ENCODE measurements at regions of chr6 and their contacts with region 1.

Region 1: DNA sequence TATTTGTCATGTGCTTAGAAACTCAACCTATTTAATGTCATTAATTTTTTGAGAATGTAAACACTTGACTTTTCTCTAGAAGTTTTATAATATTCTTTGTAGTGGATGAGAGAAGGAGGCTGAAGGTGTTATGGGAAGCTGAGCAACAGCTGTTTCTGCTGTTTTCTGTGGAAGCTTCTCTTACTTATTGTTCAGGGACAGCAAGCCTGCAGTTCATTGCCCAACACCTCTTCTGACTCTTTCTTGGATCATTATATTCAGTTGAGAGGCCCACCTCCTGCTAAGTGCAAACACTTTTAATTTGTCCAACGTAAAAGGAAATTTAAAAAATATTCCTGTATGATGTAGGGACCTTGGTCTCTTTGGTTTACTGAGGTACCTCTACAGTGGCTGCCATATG is 12.0 kb upstream of the ADGRF4 start:
- DNase-seq: no peak
- ATAC-seq: no peak
- H3K4me3 ChIP-seq: no peak overlapping the region
- H3K27ac ChIP-seq: no peak overlapping the region
- H3K4me1 ChIP-seq: no peaks in the 10 kb centered on the region
- H3K27me3 ChIP-seq: peaks cover 2 to 4% of the 10 kb centered on the region in 2 experiments; a peak in 2 of 5 replicates
- CTCF ChIP-seq: no peak
- EP300 ChIP-seq: no peak
- POLR2A ChIP-seq: no peak
- RAD21 ChIP-seq: no peak

Region 2: GRCh38 chr6:47701352-47701751 is 14.9 kb after region 1 on chr6:
- CTCF ChIA-PET with region 1: no interaction called
- POLR2A ChIA-PET with region 1: interaction called, 12 read pairs
- in situ Hi-C with region 1: no loop called
- intact Hi-C with region 1: no loop called
- DNase-seq: no peak
- ATAC-seq: no peak
- H3K4me3 ChIP-seq: no peak overlapping the region
- H3K27ac ChIP-seq: no peak overlapping the region
- H3K4me1 ChIP-seq: no peaks in the 10 kb centered on the region
- H3K27me3 ChIP-seq: peaks cover 2 to 9% of the 10 kb centered on the region in 2 experiments; a peak in 3 of 5 replicates
- CTCF ChIP-seq: no peak
- EP300 ChIP-seq: no peak
- POLR2A ChIP-seq: no peak
- RAD21 ChIP-seq: no peak

Measured in K562 (cell line).